ENCODE measurements at regions of chr2 and their contacts with region 1.

Region 1: DNA sequence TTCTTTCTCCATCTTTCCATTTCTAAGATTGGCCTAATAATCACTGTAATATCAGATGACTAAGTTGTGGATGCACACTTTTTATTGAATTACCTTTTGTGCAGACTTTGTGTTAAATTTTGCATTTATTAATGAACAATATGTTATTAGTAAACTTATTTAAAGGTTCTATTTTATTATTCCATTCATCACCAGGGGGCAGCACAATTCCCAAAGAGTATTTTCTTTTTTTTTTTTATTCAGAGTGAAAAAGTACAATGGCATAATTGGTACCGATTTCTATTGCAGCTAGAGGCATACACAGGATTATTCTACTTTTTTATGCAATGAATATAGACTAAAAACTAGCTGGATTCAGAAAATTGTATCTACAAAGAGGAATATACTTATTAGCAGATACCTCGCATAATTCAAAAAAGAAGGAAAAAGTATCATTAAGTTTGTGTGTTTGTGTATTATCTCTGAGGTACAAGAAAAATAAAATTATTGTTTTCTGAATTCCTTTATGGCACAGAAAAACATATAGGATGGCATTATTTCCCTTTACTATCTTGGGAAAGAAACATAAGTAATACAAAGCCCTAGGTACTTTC is 390.6 kb downstream of the ERBB4 start:
- DNase-seq: peak; percentile 39
- H3K4me3 Mint-ChIP-seq: no peak overlapping the region
- H3K27ac Mint-ChIP-seq: no peak overlapping the region
- H3K4me1 Mint-ChIP-seq: no peaks in the 10 kb centered on the region
- H3K27me3 Mint-ChIP-seq: peaks cover 36% of the 10 kb centered on the region
- CTCF ChIP-seq: peak; percentile 36

Region 2: GRCh38 chr2:212135739-212136138 is 12.3 kb before region 1 on chr2:
- CTCF ChIA-PET with region 1: no interaction called
- POLR2A ChIA-PET with region 1: no interaction called
- intact Hi-C with region 1: no loop called
- DNase-seq: no peak
- H3K4me3 Mint-ChIP-seq: no peak overlapping the region
- H3K27ac Mint-ChIP-seq: no peak overlapping the region
- H3K4me1 Mint-ChIP-seq: no peaks in the 10 kb centered on the region
- H3K27me3 Mint-ChIP-seq: peaks cover 19% of the 10 kb centered on the region
- CTCF ChIP-seq: no peak

Region 3: GRCh38 chr2:212249451-212249850 is 101.4 kb after region 1 on chr2:
- CTCF ChIA-PET with region 1: interaction called, 3 read pairs
- POLR2A ChIA-PET with region 1: no interaction called
- intact Hi-C with region 1: loop called (anchors 1 kb)
- DNase-seq: no peak
- H3K4me3 Mint-ChIP-seq: no peak overlapping the region
- H3K27ac Mint-ChIP-seq: no peak overlapping the region
- H3K4me1 Mint-ChIP-seq: no peaks in the 10 kb centered on the region
- H3K27me3 Mint-ChIP-seq: peaks cover 74% of the 10 kb centered on the region
- CTCF ChIP-seq: peak; percentile 31

Region 4: DNA sequence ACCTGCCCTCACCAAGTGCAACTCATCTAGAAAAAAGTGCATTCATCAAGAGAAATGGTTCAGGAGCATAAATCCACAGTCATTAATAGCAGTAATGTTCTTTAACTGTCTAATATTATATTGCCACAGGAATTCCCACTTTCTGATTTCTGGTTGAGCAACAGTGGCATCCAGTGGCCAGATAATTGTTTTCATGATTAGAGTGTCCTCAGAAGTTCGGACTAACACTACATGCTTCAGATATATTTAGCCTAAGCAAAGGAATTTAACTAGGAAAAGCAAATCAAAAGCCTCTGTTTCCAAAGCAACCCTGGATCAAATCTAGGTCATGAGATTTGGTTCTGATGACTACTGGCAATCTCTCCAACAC is 400.4 kb after region 1 on chr2:
- CTCF ChIA-PET with region 1: no interaction called
- POLR2A ChIA-PET with region 1: no interaction called
- intact Hi-C with region 1: loop called (anchors 1 kb)
- DNase-seq: peak; percentile 38
- H3K4me3 Mint-ChIP-seq: no peak overlapping the region
- H3K27ac Mint-ChIP-seq: no peak overlapping the region
- H3K4me1 Mint-ChIP-seq: no peaks in the 10 kb centered on the region
- H3K27me3 Mint-ChIP-seq: peaks cover 55% of the 10 kb centered on the region
- CTCF ChIP-seq: peak; percentile 32

Measured in MCF 10A (cell line).